Panc1 (cell line): ENCODE measurements at regions of chr6 and their contacts with region 1.

Region 1: GRCh38 chr6:110971468-110971867 is 10.4 kb upstream of the RPF2 start:
- DNase-seq: no peak
- ATAC-seq: no peak
- H3K4me3 ChIP-seq: no peak overlapping the region
- H3K27ac ChIP-seq: no peak overlapping the region
- H3K4me1 ChIP-seq: no peaks in the 10 kb centered on the region
- H3K27me3 ChIP-seq: no peaks in the 10 kb centered on the region
- CTCF ChIP-seq: no peak

Region 2: GRCh38 chr6:110930781-110931180 is 40.7 kb before region 1 on chr6:
- CTCF ChIA-PET with region 1: no interaction called
- POLR2A ChIA-PET with region 1: interaction called, 12 read pairs
- in situ Hi-C with region 1: no loop called
- intact Hi-C with region 1: no loop called
- DNase-seq: no peak
- ATAC-seq: no peak
- H3K4me3 ChIP-seq: no peak overlapping the region
- H3K27ac ChIP-seq: no peak overlapping the region
- H3K4me1 ChIP-seq: no peaks in the 10 kb centered on the region
- H3K27me3 ChIP-seq: no peaks in the 10 kb centered on the region
- CTCF ChIP-seq: no peak

Region 3: GRCh38 chr6:111011360-111012142 is 40.1 kb after region 1 on chr6:
- CTCF ChIA-PET with region 1: no interaction called
- POLR2A ChIA-PET with region 1: interaction called, 13 read pairs
- in situ Hi-C with region 1: no loop called
- intact Hi-C with region 1: no loop called
- DNase-seq: peak; percentile 36
- ATAC-seq: peak; percentile 85
- H3K4me3 ChIP-seq: no peak overlapping the region
- H3K27ac ChIP-seq: no peak overlapping the region
- H3K4me1 ChIP-seq: no peaks in the 10 kb centered on the region
- H3K27me3 ChIP-seq: no peaks in the 10 kb centered on the region
- CTCF ChIP-seq: no peak; the same call in 1 of the 2 replicates